Activated CD4-positive, alpha-beta memory T cell treated with anti-CD3 and anti-CD28 coated beads for 36 hours (primary cell): ENCODE measurements at regions of chr20 and their contacts with region 1.

Region 1: GRCh38 chr20:38748097-38748860 is at the start of gene ACTR5:
- DNase-seq: peak; percentile 97
- H3K4me3 Mint-ChIP-seq: peak within 1 kb of the TSS; percentile 91
- H3K27ac Mint-ChIP-seq: peak within 1 kb of the TSS; percentile 92
- H3K4me1 Mint-ChIP-seq: peaks cover 26% of the 10 kb centered on the region
- H3K27me3 Mint-ChIP-seq: peaks cover 5% of the 10 kb centered on the region
- total RNA-seq, gene ACTR5: 11.0 TPM

Region 2: DNA sequence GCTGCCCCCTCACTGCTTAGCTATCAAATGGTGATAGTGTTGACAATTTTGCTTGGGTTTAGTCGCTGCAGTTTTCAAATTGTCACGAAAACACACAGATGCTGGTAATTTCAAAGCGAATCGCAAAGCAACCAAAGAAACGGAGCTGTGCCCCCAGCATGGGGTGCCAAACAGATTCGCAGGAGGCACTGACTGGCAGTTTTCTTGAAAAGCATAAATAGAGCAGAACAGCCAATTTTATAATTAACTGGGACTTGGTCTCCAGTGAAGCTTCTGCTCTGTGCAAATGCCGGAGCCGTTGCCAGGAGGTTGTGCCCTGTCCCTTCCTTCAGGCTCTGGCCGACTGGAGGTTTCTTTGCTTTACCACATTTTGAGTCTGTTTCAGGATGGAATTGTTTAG is 127.8 kb before region 1 on chr20:
- CTCF ChIA-PET with region 1: no interaction called
- POLR2A ChIA-PET with region 1: no interaction called
- intact Hi-C with region 1: no loop called
- DNase-seq: no peak
- H3K4me3 Mint-ChIP-seq: no peak overlapping the region
- H3K27ac Mint-ChIP-seq: no peak overlapping the region
- H3K4me1 Mint-ChIP-seq: no peaks in the 10 kb centered on the region
- H3K27me3 Mint-ChIP-seq: peaks cover 17% of the 10 kb centered on the region

Region 3: GRCh38 chr20:38645980-38646858 is 102.1 kb before region 1 on chr20:
- CTCF ChIA-PET with region 1: interaction called, 85 read pairs
- POLR2A ChIA-PET with region 1: interaction called, 4 read pairs
- intact Hi-C with region 1: loop called (anchors 1 kb)
- DNase-seq: peak; percentile 93
- H3K4me3 Mint-ChIP-seq: peak overlapping the region; percentile 43
- H3K27ac Mint-ChIP-seq: no peak overlapping the region
- H3K4me1 Mint-ChIP-seq: peaks cover 7% of the 10 kb centered on the region
- H3K27me3 Mint-ChIP-seq: peaks cover 23% of the 10 kb centered on the region

Region 4: GRCh38 chr20:38723017-38723847 is 25.0 kb before region 1 on chr20:
- CTCF ChIA-PET with region 1: interaction called, 37 read pairs
- POLR2A ChIA-PET with region 1: no interaction called
- intact Hi-C with region 1: no loop called
- DNase-seq: no peak
- H3K4me3 Mint-ChIP-seq: no peak overlapping the region
- H3K27ac Mint-ChIP-seq: no peak overlapping the region
- H3K4me1 Mint-ChIP-seq: peaks cover 40% of the 10 kb centered on the region
- H3K27me3 Mint-ChIP-seq: peaks cover 77% of the 10 kb centered on the region

Region 5: GRCh38 chr20:38730989-38731737 is 17.1 kb before region 1 on chr20:
- CTCF ChIA-PET with region 1: interaction called, 37 read pairs
- POLR2A ChIA-PET with region 1: no interaction called
- intact Hi-C with region 1: loop called (anchors 1 kb)
- DNase-seq: peak; percentile 85
- H3K4me3 Mint-ChIP-seq: peak overlapping the region; percentile 58
- H3K27ac Mint-ChIP-seq: peak overlapping the region; percentile 52
- H3K4me1 Mint-ChIP-seq: peaks cover 42% of the 10 kb centered on the region
- H3K27me3 Mint-ChIP-seq: peaks cover 85% of the 10 kb centered on the region

Region 6: GRCh38 chr20:38764567-38765355 is 16.5 kb after region 1 on chr20:
- CTCF ChIA-PET with region 1: interaction called, 40 read pairs
- POLR2A ChIA-PET with region 1: interaction called, 3 read pairs
- intact Hi-C with region 1: loop called (anchors 1 kb)
- DNase-seq: peak; percentile 79
- H3K4me3 Mint-ChIP-seq: no peak overlapping the region
- H3K27ac Mint-ChIP-seq: peak overlapping the region; percentile 71
- H3K4me1 Mint-ChIP-seq: peaks cover 26% of the 10 kb centered on the region
- H3K27me3 Mint-ChIP-seq: no peaks in the 10 kb centered on the region

Region 7: DNA sequence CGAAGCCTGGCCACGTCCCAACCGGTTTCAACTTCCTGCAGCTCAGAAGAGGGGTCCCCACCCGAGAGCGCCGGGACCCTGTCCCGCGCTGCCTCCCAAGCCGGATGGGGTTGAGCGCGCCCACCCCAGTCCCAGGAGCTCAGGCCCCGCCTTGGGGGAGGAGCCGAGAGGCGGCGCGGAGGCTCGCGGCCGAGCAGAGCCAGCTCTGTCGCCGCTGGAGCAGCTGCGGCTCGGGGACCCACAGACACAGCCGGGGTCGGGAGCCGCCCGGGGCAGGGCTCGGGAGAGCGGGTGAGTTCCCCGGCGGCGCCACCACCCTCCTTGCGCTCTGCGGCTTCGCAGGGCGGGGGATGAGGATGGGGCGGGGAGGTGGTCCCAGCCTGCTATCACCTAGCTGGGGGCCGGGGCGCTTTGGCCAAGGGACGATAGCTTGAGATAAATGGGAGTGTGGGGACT is 57.3 kb after region 1 on chr20 and contains the start of gene PPP1R16B:
- CTCF ChIA-PET with region 1: no interaction called
- POLR2A ChIA-PET with region 1: interaction called, 6 read pairs
- intact Hi-C with region 1: loop called (anchors 5 kb)
- DNase-seq: peak; percentile 85
- H3K4me3 Mint-ChIP-seq: peak within 1 kb of the TSS; percentile 86
- H3K27ac Mint-ChIP-seq: peak within 1 kb of the TSS; percentile 96
- H3K4me1 Mint-ChIP-seq: peaks cover 51% of the 10 kb centered on the region
- H3K27me3 Mint-ChIP-seq: no peaks in the 10 kb centered on the region
- total RNA-seq, gene PPP1R16B: 111 to 114 TPM